ENCODE measurements at regions of chr6 and their contacts with region 1.

Region 1: DNA sequence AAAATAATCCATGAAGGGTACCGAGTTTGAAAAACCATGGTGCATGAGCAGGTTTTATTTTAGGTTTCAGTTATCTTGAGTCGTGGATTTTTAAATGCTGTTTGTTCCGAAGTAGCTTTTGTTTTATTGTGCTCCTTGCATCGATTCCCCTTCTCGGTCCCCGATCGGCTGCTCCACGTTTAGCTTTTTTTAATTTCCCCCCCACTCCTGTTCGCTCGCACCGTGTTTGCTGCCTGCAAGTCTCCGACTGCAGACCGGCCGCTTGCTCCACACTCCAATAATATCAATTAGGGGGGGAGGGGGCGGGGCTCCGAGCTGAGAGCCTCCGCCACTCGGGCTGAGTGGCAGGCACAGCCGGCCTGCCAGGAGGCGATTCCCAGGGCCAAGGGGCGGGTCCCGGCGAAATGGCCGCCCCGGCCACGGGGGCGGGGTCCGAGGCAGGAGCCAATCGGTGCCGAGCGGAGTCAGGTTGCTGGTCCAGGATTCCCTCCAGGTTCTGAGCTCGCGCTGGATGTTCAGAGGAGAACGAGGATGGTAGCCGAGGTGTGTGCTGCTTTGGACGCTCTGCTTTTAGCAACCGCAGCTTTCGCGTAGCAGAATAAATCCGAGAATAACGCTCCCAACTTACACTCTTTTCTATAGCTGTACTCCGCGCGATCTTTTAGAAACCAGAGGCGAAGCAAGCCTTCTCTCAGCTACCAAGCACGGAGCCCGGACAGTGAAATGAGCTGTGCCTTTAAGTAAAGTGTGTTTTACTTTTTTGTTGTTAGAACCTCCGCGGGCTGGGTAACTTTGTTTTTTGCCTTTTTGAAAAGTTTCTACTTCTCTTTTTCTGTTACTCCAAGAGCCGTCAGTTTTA is at the start of gene EPHA7:
- H3K4me3 Mint-ChIP-seq: peak within 1 kb of the TSS; percentile 79
- H3K27ac Mint-ChIP-seq: no peak within 1 kb of the TSS
- H3K4me1 Mint-ChIP-seq: peaks cover 38% of the 10 kb centered on the region
- H3K27me3 Mint-ChIP-seq: peaks cover 57% of the 10 kb centered on the region

Region 2: DNA sequence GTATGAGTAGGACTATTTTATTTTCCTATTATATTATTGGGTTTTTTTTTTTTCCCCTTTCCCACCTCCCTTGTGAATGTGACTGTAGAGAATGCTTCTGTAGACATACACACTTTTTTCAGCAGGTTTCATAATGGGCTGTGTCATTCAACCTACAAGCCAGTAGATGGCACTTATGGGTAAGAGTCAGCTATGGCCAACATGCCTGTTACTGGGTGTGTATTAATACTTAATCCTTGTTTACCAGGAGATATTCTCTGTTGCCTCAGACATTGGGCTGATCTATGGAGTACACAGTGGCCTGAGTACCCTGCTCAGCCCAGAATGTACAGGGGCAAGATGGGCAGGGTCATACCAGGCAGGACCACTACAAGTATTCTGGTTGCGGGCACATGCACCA is 382.7 kb before region 1 on chr6:
- intact Hi-C with region 1: loop called (anchors 5 kb)
- H3K4me3 Mint-ChIP-seq: no peak overlapping the region
- H3K27ac Mint-ChIP-seq: no peak overlapping the region
- H3K4me1 Mint-ChIP-seq: peaks cover 10% of the 10 kb centered on the region
- H3K27me3 Mint-ChIP-seq: no peaks in the 10 kb centered on the region

Measured in dendritic cell treated with granulocyte-macrophage colony-stimulating factor and Interleukin-4, amounts not matched to agents 40 ng/mL and 50 ng/mL, for 4 days (primary cell).